ENCODE measurements at regions of chr4 and their contacts with region 1.

Region 1: DNA sequence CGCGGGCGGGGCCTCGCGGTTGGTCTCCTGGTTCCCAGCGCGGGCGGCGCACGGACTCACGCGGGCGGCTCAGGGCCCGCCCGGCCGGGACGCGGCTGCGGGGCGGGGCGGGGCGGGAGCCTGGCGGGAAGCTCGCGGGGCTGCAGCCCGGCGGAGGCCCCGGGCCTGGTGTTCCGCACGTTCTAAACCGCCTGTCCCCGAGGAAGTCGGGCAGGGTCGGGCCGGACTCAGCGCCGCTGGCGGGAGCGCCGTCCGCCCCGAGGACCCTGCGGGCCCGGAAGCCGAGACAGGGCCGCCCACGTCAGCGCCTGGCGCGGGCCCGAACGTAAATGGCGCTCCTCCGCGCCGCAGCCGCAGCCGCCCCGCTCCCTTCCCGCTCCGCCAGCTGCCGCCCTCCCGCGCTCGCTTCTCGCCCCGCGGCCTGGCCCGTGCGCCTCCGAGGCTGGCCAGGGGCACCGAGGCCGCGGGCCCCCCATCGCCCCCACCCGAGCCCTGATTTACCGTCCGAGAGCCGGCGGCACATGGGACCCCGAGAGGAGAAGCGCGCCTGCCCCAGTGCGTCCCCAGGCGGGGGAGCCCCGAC is 309 bp upstream of the CTBP1 start:
- DNase-seq: peak; percentile 92 to 95
- ATAC-seq: peak; percentile 85
- H3K4me3 ChIP-seq: peak overlapping the region; percentile 74 to 86
- H3K27ac ChIP-seq: peak overlapping the region; percentile 76 to 84
- H3K4me1 ChIP-seq: peaks cover 0 to 3% of the 10 kb centered on the region in 2 donors
- H3K27me3 ChIP-seq: no peaks in the 10 kb centered on the region

Region 2: GRCh38 chr4:1130316-1131186 is 118.7 kb before region 1 on chr4:
- intact Hi-C with region 1: loop called in 1 of 2 experiments (anchors 10 kb)
- DNase-seq: peak; percentile 70 to 90
- ATAC-seq: peak; percentile 96
- H3K4me3 ChIP-seq: no peak overlapping the region
- H3K27ac ChIP-seq: no peak overlapping the region
- H3K4me1 ChIP-seq: no peaks in the 10 kb centered on the region
- H3K27me3 ChIP-seq: no peaks in the 10 kb centered on the region

Region 3: DNA sequence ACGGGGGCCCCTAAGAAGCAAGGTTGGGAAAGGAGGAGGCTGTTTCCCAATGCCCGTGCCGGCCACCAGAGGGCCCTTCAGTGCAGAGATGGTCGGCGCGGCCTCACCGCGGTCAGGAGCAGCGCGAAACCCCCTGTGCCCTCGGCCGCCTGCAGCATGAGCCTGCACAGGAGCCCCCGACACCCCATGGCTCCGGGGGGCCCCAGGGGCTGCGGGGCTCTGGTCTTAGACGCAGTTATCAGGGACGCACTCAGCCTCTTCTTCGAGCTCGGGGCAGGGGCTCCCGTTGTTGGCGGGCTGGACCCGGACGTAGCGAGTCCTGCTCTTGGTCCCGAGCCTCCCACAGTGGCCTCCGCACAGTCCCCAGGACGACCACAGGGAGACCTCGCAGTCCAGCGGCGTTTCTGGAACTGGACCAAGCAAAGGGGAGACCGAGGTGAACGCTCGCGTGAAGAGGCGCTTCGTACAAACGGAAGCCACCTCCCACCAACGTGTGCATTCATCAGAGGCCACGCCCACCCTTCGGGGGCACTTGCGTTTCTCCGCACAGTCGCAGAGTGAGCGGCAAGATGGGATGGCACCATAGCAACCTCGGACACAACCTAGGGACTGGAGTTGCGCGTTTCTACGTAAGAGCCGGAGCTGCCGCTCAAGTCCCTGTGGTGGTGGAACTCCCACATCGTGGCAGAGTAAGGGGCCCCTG is 81.8 kb before region 1 on chr4:
- intact Hi-C with region 1: loop called (anchors 2 to 5 kb)
- DNase-seq: peak; percentile 87 to 95
- ATAC-seq: peak; percentile 90
- H3K4me3 ChIP-seq: peak overlapping the region; percentile 17 to 45
- H3K27ac ChIP-seq: no peak overlapping the region
- H3K4me1 ChIP-seq: no peaks in the 10 kb centered on the region
- H3K27me3 ChIP-seq: no peaks in the 10 kb centered on the region

Region 4: DNA sequence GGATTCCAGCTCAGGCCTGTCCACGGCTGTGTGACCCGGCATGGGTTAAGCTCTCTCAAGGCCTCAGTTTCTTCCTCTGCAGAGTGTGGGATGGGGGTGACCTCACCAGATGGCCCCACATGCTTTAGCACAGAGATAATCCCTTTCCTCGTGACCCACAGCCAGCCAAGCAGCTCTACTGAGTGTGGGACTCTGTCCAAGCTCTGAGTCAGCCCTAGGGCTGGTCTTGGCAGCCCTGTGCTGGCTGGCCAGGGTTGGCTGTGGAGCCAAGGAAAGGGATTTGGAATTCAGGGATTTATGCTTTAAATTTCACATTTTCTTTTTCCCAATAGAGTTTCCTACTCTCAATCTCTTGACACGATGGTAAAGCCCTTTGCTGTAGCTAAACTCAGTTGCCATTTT is 57.1 kb before region 1 on chr4:
- intact Hi-C with region 1: loop called in 1 of 2 experiments (anchors 10 kb)
- DNase-seq: peak; percentile 92 to 93
- ATAC-seq: peak; percentile 95
- H3K4me3 ChIP-seq: no peak overlapping the region
- H3K27ac ChIP-seq: peak overlapping the region in 1 of 2 donors; percentile 72
- H3K4me1 ChIP-seq: no peaks in the 10 kb centered on the region
- H3K27me3 ChIP-seq: no peaks in the 10 kb centered on the region

Region 5: DNA sequence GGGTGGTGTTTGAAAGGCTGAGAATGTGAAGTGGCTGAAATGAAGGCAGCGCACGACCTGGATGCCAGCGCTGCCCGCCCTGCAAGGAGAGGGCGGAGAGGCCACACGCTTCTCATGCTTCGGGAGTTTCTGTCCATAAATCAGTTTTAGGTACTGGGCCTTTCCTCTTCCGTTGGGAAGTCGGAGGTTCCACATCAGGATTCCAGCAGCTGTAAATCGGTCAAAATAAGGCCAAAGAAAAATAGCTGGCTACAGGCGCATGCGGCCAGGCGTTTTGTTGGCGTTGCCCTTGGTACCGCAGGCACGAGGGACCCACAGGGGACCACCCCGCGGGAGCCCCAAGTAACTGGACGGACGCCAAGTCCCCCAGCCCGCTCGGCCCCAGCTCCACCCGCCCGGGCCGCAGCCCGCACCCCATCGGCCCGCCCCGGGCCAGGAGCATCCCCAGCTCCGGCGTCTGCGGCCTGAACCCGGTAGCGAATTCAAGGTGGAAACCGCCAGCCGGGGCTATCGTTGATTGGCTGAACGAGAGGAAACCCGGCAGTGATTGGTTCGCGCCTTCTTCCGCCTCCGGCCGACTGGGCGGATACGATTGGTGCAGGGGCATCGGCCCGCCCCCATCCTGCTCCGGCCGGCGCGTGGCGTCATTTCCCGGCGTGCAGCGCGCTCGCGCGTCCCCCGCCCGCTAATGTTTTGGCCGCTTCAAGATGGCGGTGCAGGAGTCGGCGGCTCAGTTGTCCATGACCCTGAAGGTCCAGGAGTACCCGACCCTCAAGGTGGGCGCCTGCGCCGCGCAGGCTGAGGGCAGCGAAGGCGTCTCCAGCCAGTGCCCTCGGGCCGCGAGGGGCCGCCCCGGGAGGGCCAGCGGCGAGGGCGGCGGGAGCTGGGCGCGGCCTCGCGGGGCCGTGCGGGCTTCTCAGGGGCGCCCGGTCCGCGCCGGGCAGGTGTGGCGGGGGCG is 40.2 kb after region 1 on chr4 and contains the start of gene MAEA:
- intact Hi-C with region 1: loop called (anchors 2 to 5 kb)
- DNase-seq: peak; percentile 98 to 99
- ATAC-seq: peak; percentile 99
- H3K4me3 ChIP-seq: peak within 1 kb of the TSS; percentile 79 to 84
- H3K27ac ChIP-seq: peak within 1 kb of the TSS in 1 of 2 donors; percentile 32
- H3K4me1 ChIP-seq: peaks cover 0 to 3% of the 10 kb centered on the region in 2 donors
- H3K27me3 ChIP-seq: no peaks in the 10 kb centered on the region
- total RNA-seq, gene MAEA: 49.8 to 61.3 TPM

Region 6: DNA sequence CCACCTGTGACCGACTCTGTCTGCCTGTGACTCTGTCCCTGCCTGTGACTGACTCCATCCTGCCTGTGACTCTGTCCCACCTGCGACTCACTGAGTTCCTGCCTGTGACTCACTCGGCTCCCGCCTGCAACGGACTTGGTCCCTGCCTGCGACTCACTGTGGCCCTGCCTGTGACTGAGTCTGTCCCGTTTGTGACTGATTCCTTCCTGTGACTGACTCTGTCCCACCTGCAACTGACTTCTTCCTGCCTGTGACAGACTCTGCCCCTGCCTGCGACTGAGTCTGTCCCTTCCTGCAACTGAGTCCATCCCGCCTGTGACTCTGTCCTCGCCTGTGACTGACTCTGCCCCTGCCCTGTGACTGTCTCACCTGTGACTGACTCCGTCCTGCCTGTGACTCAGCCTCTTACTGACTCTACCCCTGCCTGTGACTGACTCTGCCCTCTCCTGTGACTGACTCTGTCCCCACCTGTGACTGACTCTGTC is 88.2 kb after region 1 on chr4:
- intact Hi-C with region 1: no loop called
- DNase-seq: no peak
- ATAC-seq: no peak
- H3K4me3 ChIP-seq: no peak overlapping the region
- H3K27ac ChIP-seq: no peak overlapping the region
- H3K4me1 ChIP-seq: no peaks in the 10 kb centered on the region
- H3K27me3 ChIP-seq: no peaks in the 10 kb centered on the region

Region 7: GRCh38 chr4:1512738-1513660 is 263.8 kb after region 1 on chr4:
- intact Hi-C with region 1: no loop called
- DNase-seq: peak; percentile 43 to 78
- ATAC-seq: peak; percentile 17
- H3K4me3 ChIP-seq: no peak overlapping the region
- H3K27ac ChIP-seq: no peak overlapping the region
- H3K4me1 ChIP-seq: no peaks in the 10 kb centered on the region
- H3K27me3 ChIP-seq: no peaks in the 10 kb centered on the region